ENCODE measurements at regions of chr10 and their contacts with region 1.

Region 1: DNA sequence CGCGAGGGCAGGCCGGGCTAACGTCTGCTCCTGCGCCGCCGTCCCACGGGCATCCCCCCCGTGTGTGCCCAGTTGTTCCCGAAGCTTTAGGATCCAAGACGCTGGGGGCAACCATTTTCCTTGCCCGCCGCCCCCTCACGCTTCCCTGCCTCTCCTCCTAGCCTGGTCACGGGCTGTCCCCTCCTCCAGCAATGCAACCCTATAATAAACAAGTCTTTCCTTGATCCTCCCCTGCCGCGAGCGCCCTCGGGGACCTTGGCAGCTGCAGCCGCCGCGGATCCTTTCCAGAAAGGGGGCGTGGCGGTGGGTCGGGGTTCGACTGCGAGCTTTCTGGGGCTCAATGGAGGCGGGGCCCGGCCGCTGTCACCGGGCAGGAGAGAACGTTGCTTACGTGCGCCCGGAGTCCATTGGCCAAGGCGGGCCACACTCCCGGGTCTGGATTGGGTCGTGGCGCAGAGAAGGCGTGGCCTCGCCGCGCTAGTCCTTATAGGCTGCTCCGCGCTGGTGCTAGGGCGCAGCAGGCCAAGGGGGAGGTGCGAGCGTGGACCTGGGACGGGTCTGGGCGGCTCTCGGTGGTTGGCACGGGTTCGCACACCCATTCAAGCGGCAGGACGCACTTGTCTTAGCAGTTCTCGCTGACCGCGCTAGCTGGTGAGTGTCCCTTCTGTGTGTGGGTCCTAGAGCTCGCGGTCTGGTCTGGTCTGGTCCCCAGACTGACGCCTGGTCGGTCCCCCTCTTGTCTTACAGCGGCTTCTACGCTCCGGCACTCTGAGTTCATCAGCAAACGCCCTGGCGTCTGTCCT is at the start of gene DDIT4:
- DNase-seq: peak; percentile 95

Region 2: DNA sequence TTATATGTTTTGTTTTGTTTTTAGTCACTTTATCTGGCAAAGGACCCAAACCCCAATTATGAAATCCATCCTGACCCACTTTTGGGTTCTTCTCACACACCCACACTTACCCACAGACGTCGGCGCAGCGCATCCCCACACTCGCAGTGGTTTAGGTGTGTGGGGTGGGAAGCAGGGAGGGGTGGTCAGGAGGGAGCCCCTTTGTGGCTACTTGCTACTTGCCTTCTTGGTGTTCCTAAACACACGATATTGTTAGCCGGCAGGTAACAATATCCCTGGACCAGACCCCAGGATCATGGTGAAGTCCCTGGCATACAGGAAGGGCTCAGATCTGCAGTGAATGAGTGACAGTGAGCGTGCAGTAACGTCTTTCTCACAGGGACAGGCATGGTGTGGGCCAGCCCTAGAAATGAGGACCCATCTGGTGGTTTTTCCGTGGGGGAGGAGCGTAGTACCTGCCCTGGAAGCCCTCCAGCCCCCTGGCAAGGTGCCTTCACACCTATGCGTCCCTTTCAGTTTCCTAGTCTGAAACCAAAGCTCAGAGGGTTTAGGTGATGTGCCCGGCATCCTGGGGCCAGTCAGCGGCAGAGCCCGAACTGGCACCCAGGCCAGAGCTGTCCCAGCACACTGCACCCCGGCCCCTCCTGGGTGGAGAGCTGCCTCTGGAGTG is 189.7 kb before region 1 on chr10:
- CTCF ChIA-PET with region 1: no interaction called
- POLR2A ChIA-PET with region 1: no interaction called
- DNase-seq: no peak

Region 3: DNA sequence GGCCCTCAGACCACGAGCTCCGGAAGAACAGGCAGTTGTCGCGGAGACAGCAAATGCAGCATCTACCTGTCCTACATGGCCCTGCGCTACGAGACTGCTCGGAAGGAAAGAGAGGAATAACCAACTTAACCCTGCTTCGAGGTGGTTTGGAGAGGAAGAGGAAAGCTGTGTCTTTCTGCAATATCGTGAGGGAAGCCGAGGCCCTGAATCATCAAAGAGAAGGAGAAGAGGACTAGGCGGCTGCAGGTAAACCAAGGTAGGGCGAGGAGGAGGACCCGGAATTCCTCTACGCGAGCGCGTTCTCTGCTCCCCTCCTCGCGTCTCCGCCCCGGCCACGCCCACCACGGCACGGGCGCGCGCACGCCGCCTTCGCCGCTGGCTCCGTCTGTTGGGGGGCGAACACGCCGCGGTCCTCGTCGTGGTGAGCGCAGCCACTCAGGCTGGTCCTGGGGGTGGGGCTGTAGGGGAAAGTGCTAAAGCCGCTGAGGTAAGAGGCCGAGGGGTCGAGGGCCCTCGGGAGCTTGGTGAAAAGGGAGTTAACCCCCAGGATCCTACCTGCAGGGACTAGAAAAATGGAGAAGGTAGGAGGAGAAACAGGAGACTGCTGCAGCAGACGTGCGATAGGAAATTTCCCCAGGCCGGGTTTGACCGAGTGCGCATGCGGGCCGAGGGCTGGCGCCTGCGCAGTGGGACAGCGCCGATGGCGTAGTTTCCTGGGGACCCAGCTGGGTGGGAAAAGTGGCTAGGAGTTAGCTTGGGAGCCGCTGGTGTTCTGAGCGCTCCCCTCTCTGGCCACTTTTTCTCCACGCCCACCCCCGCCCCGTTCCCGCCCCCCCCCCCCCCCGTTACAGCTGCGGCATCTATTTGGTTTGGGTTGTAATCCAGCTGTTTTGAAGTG is 57.7 kb before region 1 on chr10 and contains the starts of genes ANAPC16 and ASCC1:
- CTCF ChIA-PET with region 1: interaction called, 3 read pairs
- POLR2A ChIA-PET with region 1: interaction called, 14 read pairs
- DNase-seq: peak; percentile 90

Region 4: GRCh38 chr10:72229261-72230251 is 44.1 kb before region 1 on chr10:
- CTCF ChIA-PET with region 1: interaction called, 3 read pairs
- POLR2A ChIA-PET with region 1: interaction called, 35 read pairs
- DNase-seq: no peak

Region 5: GRCh38 chr10:72248468-72249151 is 25.0 kb before region 1 on chr10:
- CTCF ChIA-PET with region 1: no interaction called
- POLR2A ChIA-PET with region 1: interaction called, 317 read pairs
- DNase-seq: peak; percentile 53

Region 6: DNA sequence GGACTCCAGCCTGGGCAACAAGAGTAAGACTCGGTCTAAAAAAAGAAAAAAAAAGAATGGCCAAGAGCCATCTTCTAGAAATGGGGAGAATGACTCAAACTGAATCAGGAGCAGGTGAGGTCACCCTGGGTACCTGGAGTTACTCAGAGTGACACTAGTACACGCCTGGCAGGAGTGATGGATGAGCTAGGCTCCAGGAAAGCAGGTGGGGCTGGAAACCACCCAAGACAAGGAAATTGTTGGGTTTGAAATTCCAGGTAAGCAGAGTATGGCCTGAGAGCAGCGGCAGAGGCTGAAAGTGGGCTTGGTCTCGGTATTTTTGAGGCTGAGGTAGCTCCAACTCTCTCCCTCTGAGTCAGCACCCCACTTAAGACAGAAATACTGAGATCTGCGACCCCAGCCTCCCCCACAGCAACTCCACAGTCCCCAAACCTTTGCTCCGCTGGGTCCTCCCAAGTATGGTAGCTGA is 18.6 kb after region 1 on chr10:
- CTCF ChIA-PET with region 1: no interaction called
- POLR2A ChIA-PET with region 1: interaction called, 27 read pairs
- DNase-seq: no peak

Region 7: GRCh38 chr10:72308320-72308987 is 34.8 kb after region 1 on chr10:
- CTCF ChIA-PET with region 1: interaction called, 3 read pairs
- POLR2A ChIA-PET with region 1: interaction called, 517 read pairs
- DNase-seq: no peak

Region 8: DNA sequence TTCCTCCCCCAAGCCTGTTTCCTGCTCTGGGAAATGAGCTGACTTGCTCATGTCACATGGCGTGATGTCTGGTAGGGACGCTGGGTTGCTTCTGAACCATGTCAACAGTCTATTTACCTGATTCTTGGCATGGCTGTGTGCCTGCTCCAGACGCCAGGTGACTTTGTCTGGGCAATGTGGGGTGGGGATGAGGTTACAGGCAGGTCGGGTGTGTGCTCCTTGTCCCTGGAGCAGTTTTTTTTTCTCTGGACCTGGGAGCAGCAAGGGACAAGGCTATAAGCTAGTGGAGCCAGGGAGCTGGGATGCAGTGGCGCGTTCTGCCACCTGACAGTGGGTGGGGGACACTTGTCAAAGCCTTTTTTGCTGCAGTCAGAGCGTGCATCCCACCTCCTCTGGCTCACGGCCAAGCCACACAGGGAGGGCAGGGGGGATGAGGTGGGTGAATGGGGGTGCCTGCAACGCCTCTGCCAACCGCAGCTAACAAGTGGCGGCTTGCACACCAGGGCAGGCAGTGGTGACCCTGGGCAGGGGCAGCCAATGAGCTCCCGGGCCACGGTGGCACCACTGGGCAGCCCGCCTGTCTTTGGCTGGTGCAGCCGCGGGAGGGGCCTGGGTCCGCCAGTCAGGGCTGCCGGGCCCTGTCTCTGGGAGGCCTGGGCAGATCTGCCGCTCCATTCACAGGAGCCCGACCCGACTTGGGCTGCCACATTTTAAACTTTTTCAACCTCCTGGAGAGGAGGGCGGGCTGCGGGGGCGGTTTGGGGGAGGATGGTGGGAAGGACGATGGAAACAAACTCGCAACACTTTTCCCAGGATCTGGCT is 58.2 kb after region 1 on chr10:
- CTCF ChIA-PET with region 1: interaction called, 11 read pairs
- POLR2A ChIA-PET with region 1: interaction called, 517 read pairs
- DNase-seq: peak; percentile 68

Region 9: GRCh38 chr10:72612203-72612826 is 338.7 kb after region 1 on chr10:
- CTCF ChIA-PET with region 1: no interaction called
- POLR2A ChIA-PET with region 1: no interaction called
- DNase-seq: peak; percentile 23

Region 10: DNA sequence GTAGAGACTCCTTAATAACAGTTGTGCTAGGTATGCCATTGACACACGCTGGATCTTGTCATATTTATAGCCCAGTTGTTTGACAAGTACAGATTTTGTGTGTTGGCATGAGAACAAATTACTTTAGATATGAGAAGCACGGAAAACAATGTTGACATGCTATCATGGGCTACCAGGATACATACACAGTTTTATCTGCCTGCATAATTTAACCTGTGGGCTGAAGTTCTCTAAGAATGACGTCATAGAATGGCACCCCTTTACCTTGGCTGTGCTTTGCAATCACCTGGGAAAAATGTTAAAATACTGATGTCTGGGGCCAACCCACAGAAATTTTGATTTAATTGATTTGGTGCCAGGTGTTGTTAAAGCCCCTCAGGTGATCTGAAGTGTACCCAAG is 678.1 kb after region 1 on chr10:
- CTCF ChIA-PET with region 1: no interaction called
- POLR2A ChIA-PET with region 1: no interaction called
- DNase-seq: no peak